Motor neuron (in vitro differentiated cells): ENCODE measurements at regions of chr2 and their contacts with region 1.

Region 1: DNA sequence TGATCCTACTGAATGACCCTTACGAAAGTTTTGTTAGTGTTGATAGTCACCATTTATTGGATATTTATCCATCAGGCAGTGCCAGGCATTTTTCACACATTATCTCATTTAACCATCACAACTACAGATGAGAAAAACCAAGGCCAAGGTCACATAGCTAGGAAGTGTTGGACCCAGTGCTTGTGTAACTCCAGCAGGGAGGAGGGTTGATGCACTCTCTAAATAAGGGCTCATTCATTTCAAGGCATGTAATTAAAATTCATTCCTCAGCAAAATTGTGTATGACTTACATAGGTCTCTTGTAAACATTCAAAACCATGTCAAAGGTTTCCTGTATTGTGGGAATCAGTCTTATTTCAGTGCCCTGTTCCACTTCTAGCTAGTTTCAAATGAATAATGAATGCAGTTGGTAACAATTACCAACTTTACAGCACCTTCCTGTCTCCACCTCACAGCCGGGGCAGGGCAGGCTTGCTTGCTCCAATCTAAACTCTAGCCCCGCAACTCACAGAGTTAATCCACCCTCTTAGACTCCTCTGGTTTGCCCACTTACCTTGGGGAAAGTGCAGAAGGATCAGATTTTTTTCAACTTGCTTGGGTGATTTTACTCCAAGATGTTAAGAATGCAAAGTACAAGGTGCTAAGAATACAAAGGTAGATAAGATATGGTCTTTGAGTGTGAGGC is 5.8 kb upstream of the MAPRE3 start:
- ATAC-seq: no peak
- H3K4me3 ChIP-seq: no peak overlapping the region
- H3K27ac ChIP-seq: no peak overlapping the region
- H3K4me1 ChIP-seq: no peaks in the 10 kb centered on the region

Region 2: DNA sequence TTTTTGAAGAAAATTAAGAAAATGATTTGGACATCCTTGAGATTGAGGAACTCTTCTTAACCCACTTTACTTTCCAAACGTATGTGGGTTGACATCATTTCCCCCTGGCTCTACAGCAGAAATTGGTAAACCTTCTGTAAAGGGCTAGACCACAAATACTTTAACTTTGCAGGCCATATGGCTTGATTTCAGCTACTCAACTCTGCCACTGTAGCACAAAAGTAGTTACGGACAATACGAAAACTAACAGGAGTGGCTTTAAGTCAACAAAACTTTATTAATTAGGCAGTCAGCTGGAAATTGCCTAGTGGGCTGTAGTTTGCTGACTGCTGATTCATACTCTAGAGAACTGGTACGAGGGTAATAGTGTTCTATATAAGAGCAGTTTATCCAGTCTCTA is 1208.1 kb before region 1 on chr2:
- in situ Hi-C with region 1: no loop called
- ATAC-seq: no peak
- H3K4me3 ChIP-seq: no peak overlapping the region
- H3K27ac ChIP-seq: no peak overlapping the region
- H3K4me1 ChIP-seq: no peaks in the 10 kb centered on the region

Region 3: DNA sequence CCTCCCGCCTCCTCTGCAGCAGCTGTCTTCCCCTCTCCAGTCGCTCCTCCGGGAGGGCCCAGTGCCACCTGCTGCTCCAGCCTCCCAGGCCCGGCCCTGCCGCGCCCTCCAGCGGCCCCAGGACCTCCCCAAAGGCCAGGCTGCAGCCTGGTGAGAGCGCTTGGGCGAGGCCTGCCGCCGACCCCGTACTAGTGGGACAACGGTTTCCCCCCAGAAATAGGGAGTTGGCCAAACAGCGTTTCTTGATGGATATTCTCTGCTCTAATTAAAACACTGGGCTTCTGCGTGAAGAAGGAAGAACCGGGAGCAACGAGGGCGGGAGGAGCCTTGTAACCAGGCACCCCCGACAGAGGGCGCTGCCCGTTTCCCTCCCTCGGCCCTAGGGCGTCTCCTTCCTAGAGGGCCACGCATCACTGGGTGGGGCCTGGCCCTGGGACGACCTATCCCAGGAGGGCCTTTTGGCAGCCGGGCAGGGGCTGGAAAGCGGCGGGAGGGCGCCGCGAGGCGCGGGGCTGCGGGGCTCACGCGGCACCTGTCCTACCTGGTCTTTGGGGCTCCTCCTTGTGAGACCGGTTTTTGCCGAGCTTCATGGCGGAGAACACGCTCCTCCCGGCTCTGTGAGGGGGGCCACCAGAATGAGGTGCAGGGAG is 461.2 kb before region 1 on chr2:
- in situ Hi-C with region 1: no loop called
- ATAC-seq: peak; percentile 75 to 98 (median 92)
- H3K4me3 ChIP-seq: peak overlapping the region in 2 of 5 donors; percentile 8 to 9
- H3K27ac ChIP-seq: no peak overlapping the region
- H3K4me1 ChIP-seq: peaks cover 17 to 39% of the 10 kb centered on the region in 2 donors

Region 4: DNA sequence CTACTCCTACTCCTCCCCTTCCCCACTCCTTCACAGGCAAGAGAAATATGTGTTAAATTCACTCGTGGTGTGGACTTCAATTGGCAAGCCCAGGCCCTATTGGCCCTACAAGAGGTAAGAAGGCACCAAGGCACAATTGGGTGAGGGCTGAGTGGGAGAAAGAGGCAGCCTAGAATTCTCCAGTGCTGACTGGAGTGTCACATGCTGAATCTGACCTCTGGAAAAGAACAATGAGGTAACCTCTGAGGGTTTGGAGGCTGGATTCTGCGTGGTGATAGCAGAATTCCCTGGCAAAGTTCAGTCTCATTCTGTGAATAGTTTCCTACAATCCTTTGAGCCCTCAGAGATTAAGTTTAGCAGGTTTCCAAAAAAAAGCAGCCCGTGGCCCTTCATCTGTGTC is 171.9 kb before region 1 on chr2:
- in situ Hi-C with region 1: no loop called
- ATAC-seq: no peak
- H3K4me3 ChIP-seq: no peak overlapping the region
- H3K27ac ChIP-seq: no peak overlapping the region
- H3K4me1 ChIP-seq: no peaks in the 10 kb centered on the region

Region 5: GRCh38 chr2:27016801-27017325 is 52.3 kb after region 1 on chr2:
- in situ Hi-C with region 1: loop called in 2 of 9 experiments (anchors 5 to 10 kb)
- ATAC-seq: peak in 5 of 8 experiments; percentile 10 to 70 (median 20)
- H3K4me3 ChIP-seq: no peak overlapping the region
- H3K27ac ChIP-seq: no peak overlapping the region
- H3K4me1 ChIP-seq: peaks cover 19 to 23% of the 10 kb centered on the region in 2 donors